ENCODE measurements at regions of chr2 and their contacts with region 1.

Region 1: GRCh38 chr2:231925303-231926179 is 655 bp downstream of the NPPC start:
- H3K4me3 Mint-ChIP-seq: peak overlapping the region; percentile 41
- H3K27ac Mint-ChIP-seq: no peak overlapping the region
- H3K4me1 Mint-ChIP-seq: peaks cover 11% of the 10 kb centered on the region
- H3K27me3 Mint-ChIP-seq: peaks cover 74% of the 10 kb centered on the region

Region 2: GRCh38 chr2:232142049-232142448 is 216.5 kb after region 1 on chr2:
- intact Hi-C with region 1: loop called (anchors 5 kb)
- H3K4me3 Mint-ChIP-seq: no peak overlapping the region
- H3K27ac Mint-ChIP-seq: no peak overlapping the region
- H3K4me1 Mint-ChIP-seq: peaks cover 9% of the 10 kb centered on the region
- H3K27me3 Mint-ChIP-seq: no peaks in the 10 kb centered on the region

Region 3: GRCh38 chr2:232444409-232445148 is 519.0 kb after region 1 on chr2:
- intact Hi-C with region 1: loop called (anchors 5 kb)
- H3K4me3 Mint-ChIP-seq: no peak overlapping the region
- H3K27ac Mint-ChIP-seq: no peak overlapping the region
- H3K4me1 Mint-ChIP-seq: peaks cover 16% of the 10 kb centered on the region
- H3K27me3 Mint-ChIP-seq: peaks cover 23% of the 10 kb centered on the region

Measured in dendritic cell treated with granulocyte-macrophage colony-stimulating factor and Interleukin-4, amounts not matched to agents 40 ng/mL and 50 ng/mL, for 4 days (primary cell).